ENCODE measurements at regions of chr10 and their contacts with region 1.

Region 1: DNA sequence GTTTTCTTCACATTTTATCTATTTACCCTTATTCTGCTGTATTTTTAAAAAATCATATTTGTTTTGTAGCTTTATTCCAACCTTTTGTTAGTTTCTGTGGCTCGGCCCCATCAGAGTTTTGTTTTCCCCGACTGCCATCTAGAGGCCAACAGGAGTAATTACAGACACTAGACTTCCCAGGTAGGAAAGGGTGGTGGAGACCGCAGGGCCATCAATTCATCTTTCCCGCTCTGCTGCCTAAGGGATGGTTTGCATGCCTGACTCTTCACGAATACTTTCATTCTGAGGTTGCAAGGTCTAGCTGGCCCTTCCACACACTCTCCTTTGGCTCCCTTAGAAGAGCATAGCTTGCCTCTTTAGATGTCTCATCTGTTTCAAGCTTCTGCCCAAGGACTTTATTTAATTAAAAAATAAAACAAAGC is 38.3 kb downstream of the LYZL2 start:
- DNase-seq: peak in 3 of 10 donors; percentile 9 to 27 (median 10)
- H3K4me3 ChIP-seq: no peak overlapping the region
- H3K27ac ChIP-seq: no peak overlapping the region
- H3K27me3 ChIP-seq: peaks cover 0 to 3% (median 0%) of the 10 kb centered on the region in 45 donors
- CTCF ChIP-seq: peak; percentile 61 to 92 (median 81)

Region 2: GRCh38 chr10:29725133-29725720 is 866.0 kb before region 1 on chr10:
- intact Hi-C with region 1: no loop called
- DNase-seq: no peak
- H3K4me3 ChIP-seq: no peak overlapping the region
- H3K27ac ChIP-seq: no peak overlapping the region
- H3K27me3 ChIP-seq: peaks cover 0 to 11% (median 0%) of the 10 kb centered on the region in 45 donors
- CTCF ChIP-seq: no peak

Region 3: GRCh38 chr10:30392564-30392990 is 198.7 kb before region 1 on chr10:
- intact Hi-C with region 1: loop called (anchors 2 kb)
- DNase-seq: peak in 9 of 10 donors; percentile 18 to 78 (median 50)
- H3K4me3 ChIP-seq: peak overlapping the region in 27 of 59 donors; percentile 4 to 54 (median 31)
- H3K27ac ChIP-seq: no peak overlapping the region
- H3K27me3 ChIP-seq: peaks cover 0 to 23% (median 0%) of the 10 kb centered on the region in 45 donors
- CTCF ChIP-seq: peak; percentile 56 to 96 (median 90)

Region 4: GRCh38 chr10:30413996-30414576 is 177.2 kb before region 1 on chr10:
- intact Hi-C with region 1: loop called in 1 of 2 experiments (anchors 5 kb)
- DNase-seq: no peak
- H3K4me3 ChIP-seq: no peak overlapping the region
- H3K27ac ChIP-seq: no peak overlapping the region
- H3K27me3 ChIP-seq: no peaks in the 10 kb centered on the region
- CTCF ChIP-seq: peak; percentile 49 to 83 (median 71)

Region 5: DNA sequence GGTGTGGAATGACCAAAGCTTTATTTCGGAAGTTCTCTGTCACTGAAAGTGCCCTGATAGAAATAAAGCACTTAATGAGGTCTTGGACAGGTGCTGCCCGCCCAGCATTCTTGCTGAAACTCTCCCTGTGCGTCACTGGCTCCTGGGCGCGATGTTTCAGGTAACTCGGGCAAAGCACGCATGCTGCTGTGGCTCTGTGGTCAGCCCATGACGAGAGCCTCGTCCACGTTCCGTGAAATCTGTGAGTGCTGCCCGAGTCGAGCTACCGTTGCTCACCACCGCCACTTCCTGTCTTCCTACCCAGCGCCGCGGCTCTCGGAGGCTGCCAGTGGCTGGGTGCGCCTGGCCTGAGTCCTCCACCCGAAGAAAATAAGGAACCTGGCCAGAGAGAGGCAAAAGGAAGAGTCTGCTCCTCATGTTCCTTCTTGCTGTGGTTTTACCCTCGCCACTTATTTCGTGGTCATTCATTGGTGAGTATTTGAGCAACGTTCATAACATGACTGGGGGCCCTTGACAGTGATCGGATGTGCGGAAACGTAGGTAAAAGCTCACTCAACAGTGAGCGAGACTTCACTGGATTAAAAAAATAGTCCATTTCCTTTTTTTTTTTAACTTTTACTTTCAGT is 61.8 kb before region 1 on chr10:
- intact Hi-C with region 1: no loop called
- DNase-seq: peak in 8 of 10 donors; percentile 24 to 64 (median 46)
- H3K4me3 ChIP-seq: no peak overlapping the region
- H3K27ac ChIP-seq: peak overlapping the region in 16 of 59 donors; percentile 14 to 74 (median 50)
- H3K27me3 ChIP-seq: no peaks in the 10 kb centered on the region
- CTCF ChIP-seq: no peak

Region 6: GRCh38 chr10:30645340-30645827 is 54.1 kb after region 1 on chr10:
- intact Hi-C with region 1: no loop called
- DNase-seq: peak in 4 of 10 donors; percentile 24 to 55 (median 42)
- H3K4me3 ChIP-seq: peak overlapping the region in 16 of 59 donors; percentile 0 to 49 (median 29)
- H3K27ac ChIP-seq: no peak overlapping the region
- H3K27me3 ChIP-seq: peaks cover 0 to 7% (median 0%) of the 10 kb centered on the region in 45 donors
- CTCF ChIP-seq: no peak

Measured in dorsolateral prefrontal cortex (tissue), 120 donors.